ENCODE measurements at regions of chr4 and their contacts with region 1.

Region 1: GRCh38 chr4:69881173-69881773 is 21.3 kb upstream of the SULT1E1 start:
- DNase-seq: peak in 4 of 5 donors; percentile 10 to 32 (median 25)
- H3K4me3 ChIP-seq: no peak overlapping the region
- H3K4me3 Mint-ChIP-seq: no peak overlapping the region
- H3K27ac ChIP-seq: no peak overlapping the region
- H3K27ac Mint-ChIP-seq: no peak overlapping the region
- H3K4me1 ChIP-seq: no peaks in the 10 kb centered on the region
- H3K4me1 Mint-ChIP-seq: no peaks in the 10 kb centered on the region
- H3K27me3 ChIP-seq: no peaks in the 10 kb centered on the region
- H3K27me3 Mint-ChIP-seq: no peaks in the 10 kb centered on the region

Region 2: DNA sequence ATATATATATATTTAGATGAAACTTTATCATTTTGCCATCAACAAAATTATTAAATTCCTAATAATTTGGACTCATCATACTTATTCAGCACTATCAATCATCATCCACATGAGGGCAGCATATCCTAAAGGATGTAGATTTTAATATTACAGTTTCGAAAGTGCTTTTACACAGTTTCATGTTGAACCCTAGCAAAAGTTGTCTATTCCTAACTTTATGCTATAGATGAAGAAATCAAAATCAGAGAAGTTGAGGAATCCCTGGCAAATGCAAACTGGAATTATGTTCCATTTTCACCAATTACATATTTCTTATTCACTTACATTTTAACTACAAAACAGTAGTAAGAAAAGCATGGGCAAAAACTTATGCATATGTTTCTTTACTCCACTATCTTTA is 191.7 kb before region 1 on chr4:
- CTCF ChIA-PET with region 1: interaction called, 12 read pairs
- POLR2A ChIA-PET with region 1: no interaction called
- intact Hi-C with region 1: loop called (anchors 1 kb)
- DNase-seq: peak in 4 of 5 donors; percentile 12 to 38 (median 33)
- H3K4me3 ChIP-seq: no peak overlapping the region
- H3K4me3 Mint-ChIP-seq: peak overlapping the region in 3 of 8 donors; percentile 34 to 58 (median 45)
- H3K27ac ChIP-seq: no peak overlapping the region
- H3K27ac Mint-ChIP-seq: no peak overlapping the region
- H3K4me1 ChIP-seq: no peaks in the 10 kb centered on the region
- H3K4me1 Mint-ChIP-seq: peaks cover 0 to 5% (median 3%) of the 10 kb centered on the region in 4 donors
- H3K27me3 ChIP-seq: no peaks in the 10 kb centered on the region
- H3K27me3 Mint-ChIP-seq: no peaks in the 10 kb centered on the region

Region 3: DNA sequence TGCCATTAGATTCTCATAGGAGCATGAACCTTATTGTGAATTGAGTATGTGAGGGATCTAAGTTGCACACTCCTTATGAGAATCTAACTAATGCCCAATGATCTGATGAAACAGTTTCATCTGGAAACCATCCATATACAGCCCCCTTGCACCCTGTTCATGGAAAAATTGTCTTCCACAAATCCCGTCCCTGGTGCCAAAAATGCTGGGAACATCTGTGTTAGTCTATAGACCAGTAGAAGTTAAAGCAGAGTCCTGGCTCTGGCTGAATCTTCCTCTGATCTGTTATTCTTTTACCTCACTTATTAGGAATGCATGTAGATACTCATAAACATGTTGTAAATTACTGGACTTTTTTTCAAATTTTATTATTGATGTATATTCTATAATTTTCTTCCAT is 150.0 kb before region 1 on chr4:
- CTCF ChIA-PET with region 1: no interaction called
- POLR2A ChIA-PET with region 1: no interaction called
- intact Hi-C with region 1: no loop called
- DNase-seq: no peak
- H3K4me3 ChIP-seq: no peak overlapping the region
- H3K4me3 Mint-ChIP-seq: no peak overlapping the region
- H3K27ac ChIP-seq: no peak overlapping the region
- H3K27ac Mint-ChIP-seq: no peak overlapping the region
- H3K4me1 ChIP-seq: no peaks in the 10 kb centered on the region
- H3K4me1 Mint-ChIP-seq: peaks cover 0 to 3% (median 1%) of the 10 kb centered on the region in 4 donors
- H3K27me3 ChIP-seq: no peaks in the 10 kb centered on the region
- H3K27me3 Mint-ChIP-seq: no peaks in the 10 kb centered on the region

Region 4: GRCh38 chr4:69743476-69744156 is 137.7 kb before region 1 on chr4:
- CTCF ChIA-PET with region 1: no interaction called
- POLR2A ChIA-PET with region 1: no interaction called
- intact Hi-C with region 1: no loop called
- DNase-seq: no peak
- H3K4me3 ChIP-seq: no peak overlapping the region
- H3K4me3 Mint-ChIP-seq: no peak overlapping the region
- H3K27ac ChIP-seq: no peak overlapping the region
- H3K27ac Mint-ChIP-seq: no peak overlapping the region
- H3K4me1 ChIP-seq: no peaks in the 10 kb centered on the region
- H3K4me1 Mint-ChIP-seq: peaks cover 0 to 2% (median 0%) of the 10 kb centered on the region in 4 donors
- H3K27me3 ChIP-seq: no peaks in the 10 kb centered on the region
- H3K27me3 Mint-ChIP-seq: no peaks in the 10 kb centered on the region

Region 5: DNA sequence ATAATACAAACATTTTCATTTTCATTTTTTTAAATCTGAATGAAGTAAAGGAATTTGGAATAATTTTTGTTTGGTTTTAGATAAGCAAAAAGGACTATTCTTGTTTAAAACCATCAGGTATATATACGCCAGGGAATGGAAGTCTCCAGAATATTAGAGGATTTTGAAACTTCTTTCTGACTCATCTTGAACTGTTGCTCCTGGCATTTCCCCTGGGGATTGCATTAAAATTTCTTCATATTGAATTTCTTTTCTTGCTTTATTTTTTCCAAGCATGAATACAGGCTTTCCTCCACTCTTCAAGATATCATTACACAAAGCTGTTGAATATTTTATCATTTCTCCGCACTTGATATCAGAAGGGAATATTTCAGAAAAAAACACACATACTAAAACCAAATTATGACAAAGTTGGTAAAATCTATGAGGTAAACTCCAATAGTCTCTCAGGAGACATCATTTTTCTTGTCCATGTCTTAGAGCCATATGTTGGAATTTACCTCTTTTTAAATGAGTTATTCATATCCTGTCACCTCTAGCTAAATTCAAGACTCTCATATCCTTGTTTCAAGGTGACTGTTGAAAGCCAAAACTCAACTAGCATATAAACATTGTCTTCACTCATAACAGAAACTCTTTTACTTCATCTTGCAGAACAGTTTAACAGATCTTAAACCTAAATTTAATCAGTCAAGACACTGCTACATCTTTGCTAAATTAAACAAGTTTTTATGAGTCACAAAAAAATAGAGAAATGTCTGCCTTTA is 28.9 kb after region 1 on chr4:
- CTCF ChIA-PET with region 1: no interaction called
- POLR2A ChIA-PET with region 1: no interaction called
- intact Hi-C with region 1: no loop called
- DNase-seq: no peak
- H3K4me3 ChIP-seq: no peak overlapping the region
- H3K4me3 Mint-ChIP-seq: no peak overlapping the region
- H3K27ac ChIP-seq: no peak overlapping the region
- H3K27ac Mint-ChIP-seq: no peak overlapping the region
- H3K4me1 ChIP-seq: no peaks in the 10 kb centered on the region
- H3K4me1 Mint-ChIP-seq: no peaks in the 10 kb centered on the region
- H3K27me3 ChIP-seq: no peaks in the 10 kb centered on the region
- H3K27me3 Mint-ChIP-seq: no peaks in the 10 kb centered on the region

Region 6: DNA sequence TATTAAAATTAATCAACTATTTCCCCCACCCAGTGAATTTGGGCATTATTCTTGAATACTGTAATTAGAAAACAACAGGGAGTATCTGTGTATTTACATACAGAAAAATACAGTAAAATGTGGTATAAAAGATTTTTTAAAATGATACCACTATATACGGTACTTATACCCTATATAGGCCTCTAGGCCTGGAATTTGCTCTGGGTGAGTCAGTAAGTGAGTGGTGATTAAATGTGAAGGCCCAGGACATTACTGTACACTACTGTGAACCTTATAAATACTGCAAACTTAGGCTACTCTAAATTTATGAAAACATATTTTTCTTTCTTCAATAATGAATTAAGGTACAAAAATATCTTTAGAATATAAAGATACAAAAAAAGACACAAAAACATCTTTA is 354.9 kb after region 1 on chr4:
- CTCF ChIA-PET with region 1: no interaction called
- POLR2A ChIA-PET with region 1: no interaction called
- intact Hi-C with region 1: no loop called
- DNase-seq: no peak
- H3K4me3 ChIP-seq: no peak overlapping the region
- H3K4me3 Mint-ChIP-seq: no peak overlapping the region
- H3K27ac ChIP-seq: no peak overlapping the region
- H3K27ac Mint-ChIP-seq: no peak overlapping the region
- H3K4me1 ChIP-seq: no peaks in the 10 kb centered on the region
- H3K4me1 Mint-ChIP-seq: no peaks in the 10 kb centered on the region
- H3K27me3 ChIP-seq: peaks cover 3% of the 10 kb centered on the region
- H3K27me3 Mint-ChIP-seq: no peaks in the 10 kb centered on the region